K562 (cell line): ENCODE measurements at regions of chr6 and their contacts with region 1.

Region 1: DNA sequence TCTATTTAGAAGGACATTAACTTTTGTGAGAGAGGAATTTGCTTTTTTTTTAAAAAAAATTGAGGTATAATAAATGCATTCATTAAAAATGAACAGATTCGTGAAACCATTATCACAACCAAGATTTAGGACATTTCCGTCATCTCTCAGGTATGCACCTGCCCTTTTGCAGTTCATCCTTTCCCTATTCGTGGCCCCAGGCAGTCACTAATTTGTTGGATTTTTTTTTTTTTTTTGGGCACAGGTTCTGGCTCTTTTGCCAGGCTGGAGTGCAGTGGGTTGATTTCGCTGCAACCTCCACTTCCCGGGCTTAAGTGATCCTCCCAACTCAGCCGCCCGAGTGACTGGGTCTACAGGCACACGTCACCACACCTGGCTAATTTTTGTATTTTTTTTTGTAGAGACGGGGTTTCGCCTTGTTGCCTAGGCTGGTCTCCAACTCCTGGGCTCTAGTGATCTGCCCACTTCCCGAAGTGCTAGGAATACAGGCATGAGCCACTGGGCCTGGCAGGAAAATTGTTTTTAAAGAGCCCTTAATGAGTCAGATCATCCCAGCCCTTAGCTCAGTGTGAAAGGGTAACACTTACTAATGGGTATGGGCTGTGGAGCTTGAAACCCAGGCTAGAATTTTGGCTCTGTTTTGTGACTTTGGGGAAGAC is 9.2 kb downstream of the PHF3 start:
- DNase-seq: no peak
- ATAC-seq: peak; percentile 11; the same call in 2 of the 3 replicates
- H3K4me3 ChIP-seq: no peak overlapping the region
- H3K27ac ChIP-seq: no peak overlapping the region
- H3K4me1 ChIP-seq: peaks cover 0 to 8% of the 10 kb centered on the region in 2 experiments; a peak in 2 of 5 replicates
- H3K27me3 ChIP-seq: no peaks in the 10 kb centered on the region
- CTCF ChIP-seq: no peak
- EP300 ChIP-seq: no peak
- POLR2A ChIP-seq: no peak
- RAD21 ChIP-seq: no peak

Region 2: DNA sequence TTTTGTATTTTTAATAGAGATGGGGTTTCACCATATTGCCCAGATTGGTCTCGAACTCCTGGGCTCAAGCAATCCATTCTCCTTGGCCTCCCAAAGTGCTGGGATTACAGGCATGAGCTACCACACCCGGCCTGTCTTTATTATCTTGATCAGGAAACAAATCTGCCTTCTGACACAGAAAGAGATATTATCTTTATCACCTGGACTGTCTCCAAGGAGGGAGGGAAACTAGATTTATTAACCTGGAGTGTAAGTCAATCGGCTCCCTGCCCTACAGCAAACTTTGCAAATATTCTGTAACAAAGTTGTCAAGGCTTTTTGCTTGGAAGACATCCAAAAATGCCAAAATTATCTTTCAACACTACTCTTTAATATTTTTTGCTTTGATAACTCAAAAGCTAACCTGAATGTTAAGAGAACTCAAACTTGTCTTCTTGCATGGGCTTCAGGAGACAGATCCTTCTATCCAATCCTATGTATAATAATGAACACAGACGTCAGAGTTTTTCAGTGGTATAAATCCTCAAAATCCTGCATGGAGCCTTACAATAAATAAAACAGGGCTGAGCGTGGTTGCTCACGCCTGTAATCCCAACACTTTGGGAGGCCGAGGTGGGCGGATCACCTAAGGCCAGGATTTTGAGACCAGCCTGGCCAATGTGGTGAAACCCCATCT is 157.5 kb before region 1 on chr6:
- CTCF ChIA-PET with region 1: no interaction called
- POLR2A ChIA-PET with region 1: no interaction called
- in situ Hi-C with region 1: no loop called
- intact Hi-C with region 1: no loop called
- DNase-seq: no peak
- ATAC-seq: no peak
- H3K4me3 ChIP-seq: no peak overlapping the region
- H3K27ac ChIP-seq: no peak overlapping the region
- H3K4me1 ChIP-seq: no peaks in the 10 kb centered on the region
- H3K27me3 ChIP-seq: no peaks in the 10 kb centered on the region
- CTCF ChIP-seq: no peak
- EP300 ChIP-seq: no peak
- POLR2A ChIP-seq: no peak
- RAD21 ChIP-seq: no peak

Region 3: DNA sequence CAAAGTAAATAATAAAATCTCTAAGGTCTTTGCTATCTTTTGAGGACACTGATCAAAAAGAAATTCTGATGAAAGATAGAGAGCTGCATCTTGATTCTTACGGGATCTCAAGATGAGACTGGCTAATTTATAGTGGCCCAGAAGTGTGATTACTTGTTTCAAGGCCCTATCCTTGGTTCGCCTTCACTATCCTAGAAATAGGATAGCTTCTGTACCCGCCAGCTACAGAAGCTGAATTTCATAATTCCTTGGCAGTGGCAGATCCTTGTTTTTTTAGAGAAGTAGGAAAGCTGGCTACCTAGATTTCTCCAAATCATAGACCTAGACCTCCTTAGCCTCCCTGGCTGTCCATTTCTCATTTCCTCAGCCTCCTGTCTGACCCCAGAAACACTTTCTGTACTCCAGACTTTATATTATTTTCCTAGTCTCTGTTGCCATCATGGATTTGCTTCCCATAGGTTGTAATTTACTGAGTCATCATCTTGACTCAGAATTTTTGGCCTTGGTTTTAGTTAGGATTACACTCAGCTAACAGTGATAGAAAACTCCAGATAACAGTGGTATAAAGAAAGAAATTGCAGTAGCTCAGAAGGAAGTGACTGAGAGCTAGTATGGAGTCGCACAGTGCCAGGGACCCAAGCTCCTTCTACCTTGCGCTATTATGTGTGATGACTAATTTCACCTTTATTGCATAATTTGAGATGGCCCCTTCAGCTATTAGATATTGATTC is 18.5 kb after region 1 on chr6:
- CTCF ChIA-PET with region 1: no interaction called
- POLR2A ChIA-PET with region 1: interaction called, 10 read pairs
- in situ Hi-C with region 1: no loop called
- intact Hi-C with region 1: no loop called
- DNase-seq: peak in 2 of 4 experiments; percentile 18 to 37
- ATAC-seq: peak; percentile 77
- H3K4me3 ChIP-seq: no peak overlapping the region
- H3K27ac ChIP-seq: peak overlapping the region; percentile 4; the same call in 2 of the 3 replicates
- H3K4me1 ChIP-seq: peaks cover 0 to 9% of the 10 kb centered on the region in 2 experiments; a peak in 3 of 5 replicates
- H3K27me3 ChIP-seq: no peaks in the 10 kb centered on the region
- CTCF ChIP-seq: no peak
- EP300 ChIP-seq: no peak
- POLR2A ChIP-seq: no peak
- RAD21 ChIP-seq: no peak